HepG2 (cell line): ENCODE measurements at regions of chr3 and their contacts with region 1.

Region 1: DNA sequence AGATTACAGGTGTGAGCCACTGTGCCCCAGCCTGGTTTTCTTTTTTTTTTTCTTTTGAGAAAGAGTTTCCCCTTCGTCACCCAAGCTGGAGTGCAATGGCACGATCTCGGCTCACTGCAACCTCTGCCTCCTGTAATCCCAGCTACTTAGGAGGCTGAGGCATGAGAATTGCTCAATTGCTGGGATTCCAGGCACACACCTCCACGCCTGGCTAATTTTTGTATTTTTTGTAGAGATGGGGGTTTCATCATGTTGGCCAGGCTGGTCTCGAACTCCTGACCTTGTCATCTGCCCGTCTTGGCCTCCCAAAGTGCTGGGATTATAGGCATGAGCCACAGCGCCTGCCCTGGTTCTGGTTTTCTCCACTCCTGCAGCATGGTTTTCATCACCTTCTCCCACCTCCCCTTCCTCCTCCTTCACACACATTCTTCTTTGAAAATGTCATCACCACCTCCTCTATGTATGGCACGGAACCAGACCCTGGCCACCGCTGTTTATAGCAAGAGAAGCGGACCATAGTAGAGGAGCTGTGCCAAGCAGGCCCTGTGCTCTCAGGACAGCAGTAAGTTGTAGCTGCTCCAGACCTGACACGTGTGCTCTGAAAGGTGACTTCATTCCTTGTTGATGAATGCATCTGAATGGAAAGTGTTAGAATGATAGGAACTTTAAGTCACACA is 14.6 kb upstream of the AHSG start:
- DNase-seq: peak; percentile 68
- ATAC-seq: peak; percentile 38
- H3K4me3 ChIP-seq: peak overlapping the region in 1 of 3 experiments; percentile 63; a peak in 2 of 6 replicates
- H3K27ac ChIP-seq: peak overlapping the region; percentile 95
- H3K4me1 ChIP-seq: peaks cover 96% of the 10 kb centered on the region
- H3K27me3 ChIP-seq: no peaks in the 10 kb centered on the region
- CTCF ChIP-seq: no peak
- EP300 ChIP-seq: no peak
- POLR2A ChIP-seq: no peak
- RAD21 ChIP-seq: no peak

Region 2: GRCh38 chr3:186609247-186609868 is 11.1 kb after region 1 on chr3:
- CTCF ChIA-PET with region 1: interaction called, 3 read pairs
- POLR2A ChIA-PET with region 1: interaction called, 854 read pairs
- in situ Hi-C with region 1: no loop called
- intact Hi-C with region 1: loop called (anchors 1 kb)
- DNase-seq: no peak
- ATAC-seq: no peak
- H3K4me3 ChIP-seq: no peak overlapping the region
- H3K27ac ChIP-seq: peak overlapping the region; percentile 52
- H3K4me1 ChIP-seq: peaks cover 97% of the 10 kb centered on the region
- H3K27me3 ChIP-seq: no peaks in the 10 kb centered on the region; a peak in 1 of 5 replicates
- CTCF ChIP-seq: peak; percentile 61
- EP300 ChIP-seq: no peak
- POLR2A ChIP-seq: no peak
- RAD21 ChIP-seq: 0 out of 2 replicates have a peak, but pooled peaks have one; percentile 17

Region 3: DNA sequence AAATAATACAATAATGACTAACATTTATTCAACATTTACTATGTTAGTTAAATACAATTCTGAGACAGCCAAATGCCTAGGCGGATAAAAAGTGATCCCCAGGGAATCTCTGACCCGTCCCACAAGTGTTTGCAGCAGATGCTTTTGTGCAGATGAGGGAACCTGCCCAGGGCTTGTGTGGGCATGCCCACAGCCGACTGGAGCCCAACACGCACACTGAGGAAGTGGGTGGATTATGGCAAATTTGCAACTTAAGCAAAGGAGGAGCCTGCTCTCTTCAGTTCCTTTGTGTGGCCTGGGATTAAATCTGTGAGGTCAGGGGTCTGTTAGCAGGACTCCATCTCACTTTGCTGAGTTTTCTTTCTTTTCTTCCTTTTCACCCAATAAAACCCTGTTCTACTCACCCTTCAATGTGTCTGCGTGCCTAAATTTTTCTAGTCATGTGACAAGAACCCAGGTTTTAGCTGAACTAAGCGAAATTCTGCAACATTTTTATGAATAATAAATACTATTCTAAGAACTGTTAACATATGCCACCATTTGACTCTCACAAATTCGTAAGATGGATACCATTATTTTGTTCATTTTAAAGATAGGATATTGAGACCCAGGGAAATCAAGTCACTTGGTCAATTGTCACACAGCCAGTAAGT is 585.1 kb after region 1 on chr3:
- CTCF ChIA-PET with region 1: no interaction called
- POLR2A ChIA-PET with region 1: no interaction called
- in situ Hi-C with region 1: no loop called
- intact Hi-C with region 1: no loop called
- DNase-seq: no peak
- ATAC-seq: no peak
- H3K4me3 ChIP-seq: no peak overlapping the region
- H3K27ac ChIP-seq: no peak overlapping the region
- H3K4me1 ChIP-seq: no peaks in the 10 kb centered on the region
- H3K27me3 ChIP-seq: no peaks in the 10 kb centered on the region; a peak in 1 of 5 replicates
- CTCF ChIP-seq: no peak
- EP300 ChIP-seq: no peak
- POLR2A ChIP-seq: no peak
- RAD21 ChIP-seq: no peak